ENCODE measurements at regions of chr5 and their contacts with region 1.

Region 1: GRCh38 chr5:78648359-78649210 is at the start of gene LHFPL2:
- DNase-seq: peak; percentile 67 to 78
- ATAC-seq: peak; percentile 81 to 86
- H3K4me3 ChIP-seq: peak within 1 kb of the TSS; percentile 97
- H3K27ac ChIP-seq: peak within 1 kb of the TSS; percentile 99 to 100
- H3K4me1 ChIP-seq: peaks cover 49% of the 10 kb centered on the region
- CTCF ChIP-seq: no peak
- EP300 ChIP-seq: no peak
- POLR2A ChIP-seq: peak; percentile 45
- RAD21 ChIP-seq: no peak; a peak in 2 of 5 replicates
- polyA plus RNA-seq, gene LHFPL2: 24.9 and 32.2 TPM in 2 replicates

Region 2: GRCh38 chr5:78634634-78635033 is 14.0 kb before region 1 on chr5:
- CTCF ChIA-PET with region 1: interaction called, 16 read pairs
- POLR2A ChIA-PET with region 1: interaction called, 8 read pairs
- DNase-seq: peak in 1 of 2 experiments; percentile 24
- ATAC-seq: no peak; a peak in 1 of 6 replicates
- H3K4me3 ChIP-seq: no peak overlapping the region
- H3K27ac ChIP-seq: peak overlapping the region in 1 of 2 experiments; percentile 51; a peak in 2 of 6 replicates
- H3K4me1 ChIP-seq: peaks cover 47% of the 10 kb centered on the region
- CTCF ChIP-seq: peak; percentile 37; the same call in 2 of the 3 replicates
- EP300 ChIP-seq: no peak
- POLR2A ChIP-seq: no peak
- RAD21 ChIP-seq: peak; percentile 43 to 47

Region 3: DNA sequence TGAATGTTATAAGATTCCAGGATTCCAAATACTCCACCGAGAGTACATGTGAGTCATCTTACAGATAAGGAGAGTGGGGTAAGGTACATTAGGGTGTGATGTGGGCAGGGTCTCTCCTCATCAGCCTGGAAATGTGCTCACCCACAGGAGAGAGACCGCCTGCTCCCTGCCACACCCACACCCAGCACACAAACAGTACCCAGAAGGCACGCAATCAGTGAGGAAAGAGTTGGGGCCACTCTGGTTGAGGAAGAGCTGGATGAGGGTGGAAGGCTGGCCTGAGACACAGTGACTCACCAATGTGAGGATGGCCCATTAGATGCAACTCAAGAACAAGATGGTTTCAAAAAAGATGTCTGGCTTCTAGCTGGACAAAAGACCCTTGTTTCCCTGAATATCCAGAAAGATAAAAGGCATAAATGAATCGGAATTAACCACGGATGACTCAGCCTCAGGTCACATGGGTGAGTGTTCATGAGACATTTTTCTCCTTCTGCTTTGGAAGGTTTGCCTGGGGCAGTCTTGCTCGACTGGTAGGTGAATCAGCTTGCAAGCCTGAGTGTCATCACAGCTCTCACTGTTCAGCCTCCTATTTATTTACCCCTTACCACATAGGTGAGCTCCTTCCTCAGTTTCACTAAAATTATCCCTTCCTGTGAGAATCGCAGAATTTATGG is 51.1 kb after region 1 on chr5:
- CTCF ChIA-PET with region 1: interaction called, 5 read pairs
- POLR2A ChIA-PET with region 1: interaction called, 16 read pairs
- DNase-seq: peak; percentile 76 to 96
- ATAC-seq: peak; percentile 98 to 99
- H3K4me3 ChIP-seq: peak overlapping the region; percentile 15; the same call in 1 of the 3 replicates
- H3K27ac ChIP-seq: peak overlapping the region; percentile 92 to 96
- H3K4me1 ChIP-seq: peaks cover 31% of the 10 kb centered on the region
- CTCF ChIP-seq: no peak
- EP300 ChIP-seq: peak in 1 of 2 experiments; percentile 67; a peak in 3 of 5 replicates
- POLR2A ChIP-seq: no peak
- RAD21 ChIP-seq: peak in 1 of 2 experiments; percentile 16

Region 4: DNA sequence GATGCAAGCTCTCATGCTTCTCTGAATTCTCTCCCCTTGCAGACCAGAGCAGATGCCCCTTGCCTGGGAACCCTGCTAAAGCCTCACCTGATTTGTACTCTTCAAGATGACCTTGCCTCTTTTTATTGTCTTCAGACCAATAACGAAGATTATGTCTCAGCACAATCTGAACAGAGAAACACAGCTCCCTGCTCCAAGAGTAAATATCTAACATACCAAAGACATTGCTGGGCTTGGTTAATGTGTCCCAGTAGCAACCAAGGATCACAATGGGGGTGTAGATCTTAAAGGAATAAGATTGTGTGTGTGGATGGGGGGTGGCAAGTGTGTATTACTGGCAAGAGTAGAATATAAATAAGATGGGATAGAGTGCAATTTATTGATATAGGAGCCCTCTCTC is 67.6 kb after region 1 on chr5:
- CTCF ChIA-PET with region 1: no interaction called
- POLR2A ChIA-PET with region 1: no interaction called
- DNase-seq: peak in 1 of 2 experiments; percentile 62
- ATAC-seq: peak; percentile 51 to 73; a peak in 3 of 6 replicates
- H3K4me3 ChIP-seq: no peak overlapping the region
- H3K27ac ChIP-seq: peak overlapping the region; percentile 74 to 78
- H3K4me1 ChIP-seq: peaks cover 54% of the 10 kb centered on the region
- CTCF ChIP-seq: no peak
- EP300 ChIP-seq: no peak
- POLR2A ChIP-seq: no peak
- RAD21 ChIP-seq: 0 out of 5 replicates have a peak, but pooled peaks of 1 of the 2 experiments have one; percentile 11

Measured in A549 (cell line).